PC-9 (cell line): ENCODE measurements at regions of chr3 and their contacts with region 1.

Region 1: DNA sequence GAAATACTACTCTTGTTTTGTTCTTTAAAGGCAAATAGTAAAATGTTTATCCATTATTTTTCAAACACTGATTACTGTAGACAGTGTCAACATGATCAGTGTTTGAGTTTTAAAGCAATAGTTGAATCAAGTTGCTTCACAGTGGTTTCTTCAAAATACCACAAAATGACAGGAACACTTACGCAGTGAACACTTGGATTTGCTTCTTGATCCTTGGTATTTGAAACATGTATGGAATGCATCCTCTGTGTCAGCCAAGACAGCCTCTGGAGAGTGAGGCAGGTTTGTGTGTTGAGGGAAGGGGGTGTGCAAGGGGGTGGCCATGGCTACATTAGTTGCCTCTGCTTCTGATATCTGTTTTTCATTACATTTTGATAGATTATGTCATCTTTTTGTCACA is 413.0 kb downstream of the RBMS3 start:
- DNase-seq: peak; percentile 59 to 81
- H3K4me3 ChIP-seq: no peak overlapping the region
- H3K27ac ChIP-seq: peak overlapping the region; percentile 65
- H3K4me1 ChIP-seq: peaks cover 28% of the 10 kb centered on the region
- H3K27me3 ChIP-seq: no peaks in the 10 kb centered on the region
- CTCF ChIP-seq: no peak

Region 2: DNA sequence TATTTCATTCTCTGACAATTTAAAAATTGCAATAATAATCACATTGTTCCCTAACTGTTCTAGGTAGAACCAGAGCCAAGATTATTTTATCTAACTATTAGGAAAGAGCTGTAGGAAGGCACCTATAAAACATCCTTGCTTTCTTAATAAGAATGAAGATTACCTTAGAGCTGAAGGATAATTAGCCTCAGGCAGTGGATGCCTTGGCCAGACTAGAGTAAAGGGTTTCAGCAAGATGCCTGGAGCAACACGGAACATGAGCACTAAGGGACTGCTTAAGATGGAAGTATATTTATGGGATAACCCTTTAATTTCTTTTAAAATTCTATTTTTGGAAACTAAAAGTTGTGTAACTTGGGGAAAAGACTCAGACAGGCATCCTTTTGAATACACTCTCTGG is 869.5 kb before region 1 on chr3:
- CTCF ChIA-PET with region 1: no interaction called
- POLR2A ChIA-PET with region 1: no interaction called
- intact Hi-C with region 1: no loop called
- DNase-seq: no peak
- H3K4me3 ChIP-seq: no peak overlapping the region
- H3K27ac ChIP-seq: no peak overlapping the region
- H3K4me1 ChIP-seq: no peaks in the 10 kb centered on the region
- H3K27me3 ChIP-seq: no peaks in the 10 kb centered on the region
- CTCF ChIP-seq: no peak

Region 3: DNA sequence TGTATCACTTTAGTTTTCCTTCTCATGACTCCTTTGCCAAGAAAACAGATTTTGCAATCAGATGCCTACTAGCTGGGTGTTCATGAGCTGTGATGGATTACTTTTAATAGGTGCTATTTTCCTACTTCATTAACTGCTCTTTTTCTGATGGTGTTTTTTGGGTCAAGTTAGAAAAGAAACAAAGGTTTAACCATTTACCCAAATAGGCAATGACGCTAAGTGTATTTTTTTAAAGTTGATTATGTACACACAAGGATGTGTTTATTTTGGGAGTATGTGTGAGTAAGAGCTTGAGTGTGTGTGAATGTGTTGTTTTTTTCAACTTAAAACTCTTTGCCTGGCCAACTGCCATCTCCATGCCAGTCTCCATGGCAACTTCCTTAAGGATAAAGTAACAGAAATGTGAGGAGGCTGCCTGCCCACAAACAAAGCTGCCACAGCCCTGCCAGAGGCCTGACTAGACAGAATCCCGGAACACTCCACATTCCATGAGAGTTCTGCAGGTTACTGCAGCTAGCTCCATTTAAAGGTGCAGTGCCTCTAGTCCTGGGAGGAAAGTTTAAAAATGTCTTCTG is 628.6 kb before region 1 on chr3:
- CTCF ChIA-PET with region 1: no interaction called
- POLR2A ChIA-PET with region 1: no interaction called
- intact Hi-C with region 1: loop called (anchors 1 kb)
- DNase-seq: peak; percentile 52 to 87
- H3K4me3 ChIP-seq: no peak overlapping the region
- H3K27ac ChIP-seq: no peak overlapping the region
- H3K4me1 ChIP-seq: no peaks in the 10 kb centered on the region
- H3K27me3 ChIP-seq: no peaks in the 10 kb centered on the region
- CTCF ChIP-seq: no peak

Region 4: DNA sequence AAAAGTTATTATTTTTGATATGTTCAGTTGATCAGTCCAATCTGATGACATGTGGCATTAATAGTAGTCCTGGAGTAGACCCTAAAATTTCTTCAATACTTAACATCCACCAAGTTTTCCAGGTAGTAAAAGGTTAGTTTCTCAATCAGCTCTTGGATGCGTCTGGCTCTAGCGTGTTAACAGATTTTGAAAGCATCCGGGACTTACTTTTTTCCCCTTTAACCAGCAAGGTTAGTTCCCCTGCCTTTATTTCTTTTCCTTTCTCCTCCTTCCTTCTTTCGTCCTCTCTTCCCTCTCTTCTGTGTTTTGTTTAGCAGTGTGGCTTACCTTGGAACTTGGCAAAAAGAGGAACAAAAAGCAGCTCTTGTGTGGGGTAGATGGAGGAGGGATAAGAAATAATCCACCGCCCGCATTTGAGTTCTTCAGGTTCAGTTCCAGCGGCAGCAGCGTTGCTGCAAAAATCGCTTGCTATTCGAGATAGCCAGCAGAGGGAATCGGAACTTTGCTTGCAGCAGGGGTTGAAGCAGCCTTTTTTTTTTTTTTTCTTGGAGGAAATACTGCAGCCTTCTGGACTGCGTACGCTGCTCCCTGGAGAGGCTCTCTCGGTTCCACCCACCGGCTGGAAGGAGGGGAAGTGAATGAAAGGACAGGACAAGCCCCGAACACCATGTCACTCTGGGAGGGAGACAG is 413.3 kb before region 1 on chr3 and contains the start of gene RBMS3:
- CTCF ChIA-PET with region 1: no interaction called
- POLR2A ChIA-PET with region 1: no interaction called
- intact Hi-C with region 1: loop called (anchors 2 kb)
- DNase-seq: peak in 1 of 2 experiments; percentile 66
- H3K4me3 ChIP-seq: peak within 1 kb of the TSS; percentile 43; the same call in 1 of the 2 replicates
- H3K27ac ChIP-seq: no peak within 1 kb of the TSS
- H3K4me1 ChIP-seq: no peaks in the 10 kb centered on the region; the same call in 1 of the 2 replicates
- H3K27me3 ChIP-seq: no peaks in the 10 kb centered on the region
- CTCF ChIP-seq: peak; percentile 27; the same call in 1 of the 2 replicates
- total RNA-seq, gene RBMS3: 3.5 and 3.9 TPM in 2 replicates

Region 5: DNA sequence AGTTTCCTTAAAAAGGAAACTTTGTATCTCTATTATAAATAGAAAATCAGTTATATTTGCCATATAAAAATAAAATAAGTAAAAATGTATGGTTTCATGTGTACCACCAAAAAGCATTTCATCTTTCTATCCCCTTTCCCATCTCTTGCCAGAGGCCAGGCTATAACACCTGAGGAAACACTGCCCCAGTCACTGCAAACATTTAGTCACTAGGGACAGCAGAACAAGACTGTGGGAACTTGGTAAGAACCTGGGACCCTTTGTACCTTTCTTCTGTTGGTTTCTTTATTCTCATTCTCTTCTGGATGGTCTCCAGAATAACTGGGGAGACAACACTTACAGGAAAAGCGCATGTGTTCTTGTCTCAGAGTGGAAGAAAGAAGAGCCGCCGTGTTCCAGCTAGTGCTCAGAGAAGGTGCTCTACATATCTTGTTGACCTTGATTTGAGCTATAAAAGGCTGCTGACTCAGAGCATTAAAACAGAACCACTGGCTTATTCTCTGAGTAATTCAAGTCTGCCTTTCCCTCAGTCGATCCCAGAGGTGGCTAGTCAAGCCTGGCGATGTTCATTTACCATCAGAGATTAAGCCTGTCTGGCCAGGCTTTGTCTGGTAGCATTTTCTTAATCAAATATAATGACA is 51.4 kb before region 1 on chr3:
- CTCF ChIA-PET with region 1: no interaction called
- POLR2A ChIA-PET with region 1: no interaction called
- intact Hi-C with region 1: no loop called
- DNase-seq: no peak
- H3K4me3 ChIP-seq: no peak overlapping the region
- H3K27ac ChIP-seq: no peak overlapping the region
- H3K4me1 ChIP-seq: no peaks in the 10 kb centered on the region
- H3K27me3 ChIP-seq: no peaks in the 10 kb centered on the region
- CTCF ChIP-seq: no peak

Region 6: DNA sequence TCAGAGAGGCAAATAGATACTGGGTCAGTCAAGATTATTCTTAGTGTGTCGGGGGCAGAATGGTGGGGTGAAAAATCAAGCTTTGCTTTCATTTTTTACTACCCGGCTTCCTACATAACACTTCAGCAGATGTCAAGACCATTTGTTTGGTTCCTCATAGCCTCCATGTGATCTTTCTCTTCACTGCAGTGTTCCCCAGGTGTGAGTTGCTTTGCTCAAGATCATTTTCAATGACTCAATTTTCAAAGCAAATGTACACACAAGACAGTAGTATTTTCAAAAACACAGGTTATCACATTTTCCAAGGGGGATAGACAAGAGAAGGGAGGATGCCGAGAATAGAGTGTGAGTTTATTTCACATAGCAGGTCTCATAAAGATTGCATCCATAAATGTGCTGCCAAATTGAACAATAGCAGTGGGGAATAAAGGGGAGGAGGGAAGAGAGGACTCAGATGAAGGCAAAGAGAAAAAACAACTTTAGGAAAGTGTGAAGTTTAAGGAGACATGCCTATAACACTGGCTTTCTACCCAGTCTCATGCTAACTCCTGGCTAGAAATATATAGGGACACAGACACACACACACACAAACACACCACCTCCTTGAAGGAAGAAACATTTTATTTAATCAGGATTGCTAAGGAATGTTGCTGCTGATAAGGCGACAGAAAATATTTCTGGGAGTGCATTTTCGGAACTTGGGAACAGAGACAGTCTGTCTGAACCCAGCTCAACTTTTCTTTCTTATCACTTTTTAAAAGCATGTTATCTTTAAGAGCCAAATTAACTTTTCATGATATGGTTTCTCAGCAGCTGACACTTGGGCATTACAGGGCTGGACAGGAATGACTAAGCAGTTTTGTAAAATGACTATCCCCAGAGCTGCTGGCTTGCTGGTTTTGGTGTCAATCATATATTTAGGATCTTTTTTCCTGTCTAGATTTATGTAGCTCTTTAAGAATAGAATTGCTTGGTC is 10.6 kb before region 1 on chr3:
- CTCF ChIA-PET with region 1: no interaction called
- POLR2A ChIA-PET with region 1: no interaction called
- intact Hi-C with region 1: no loop called
- DNase-seq: peak in 1 of 2 experiments; percentile 17
- H3K4me3 ChIP-seq: no peak overlapping the region
- H3K27ac ChIP-seq: peak overlapping the region; percentile 64
- H3K4me1 ChIP-seq: peaks cover 12% of the 10 kb centered on the region
- H3K27me3 ChIP-seq: no peaks in the 10 kb centered on the region
- CTCF ChIP-seq: no peak

Region 7: DNA sequence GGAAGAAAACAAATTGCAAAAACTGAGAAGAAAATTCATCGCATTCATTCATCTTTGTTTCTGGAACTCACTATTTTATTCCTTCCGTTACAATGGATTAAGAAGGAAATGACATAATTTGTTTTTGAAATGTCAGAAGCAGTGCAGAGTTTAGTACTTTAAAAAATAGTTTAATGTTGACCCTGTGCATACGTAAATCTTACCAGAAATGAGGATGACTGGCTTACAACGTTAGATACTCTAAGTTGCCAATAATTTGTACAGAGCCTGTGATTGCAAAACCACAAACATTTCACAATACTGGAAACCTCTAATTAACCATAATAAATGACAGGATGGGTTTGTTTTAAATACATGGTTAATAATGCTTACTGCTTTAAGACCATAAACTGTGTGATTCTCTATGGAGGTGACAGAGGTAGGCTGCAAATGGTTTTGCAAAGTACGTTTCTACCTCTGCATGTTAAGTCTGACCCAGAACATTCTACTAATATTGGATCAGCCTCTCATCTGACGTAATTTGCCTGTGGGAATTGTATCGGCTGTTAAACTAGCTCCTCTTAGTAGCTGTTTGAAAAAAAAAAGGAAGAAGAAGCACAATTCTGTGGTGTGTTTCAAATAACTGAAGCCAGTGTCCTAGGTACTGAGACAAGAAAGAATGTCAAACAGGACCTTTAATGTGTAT is 64.9 kb after region 1 on chr3:
- CTCF ChIA-PET with region 1: no interaction called
- POLR2A ChIA-PET with region 1: no interaction called
- intact Hi-C with region 1: loop called (anchors 1 kb)
- DNase-seq: no peak
- H3K4me3 ChIP-seq: no peak overlapping the region
- H3K27ac ChIP-seq: no peak overlapping the region
- H3K4me1 ChIP-seq: no peaks in the 10 kb centered on the region
- H3K27me3 ChIP-seq: no peaks in the 10 kb centered on the region
- CTCF ChIP-seq: no peak